Activated B cell treated with CpG ODN at 0.5 μM for 24 hours (primary cell): ENCODE measurements at regions of chr5 and their contacts with region 1.

Region 1: GRCh38 chr5:178895651-178896571 is at the start of gene ZFP2:
- DNase-seq: peak; percentile 41
- ATAC-seq: peak; percentile 93
- H3K4me3 Mint-ChIP-seq: peak within 1 kb of the TSS; percentile 82
- H3K27ac Mint-ChIP-seq: no peak within 1 kb of the TSS
- H3K4me1 Mint-ChIP-seq: peaks cover 12% of the 10 kb centered on the region
- H3K27me3 Mint-ChIP-seq: no peaks in the 10 kb centered on the region
- CTCF ChIP-seq: no peak
- total RNA-seq, gene ZFP2: 0.44 and 0.95 TPM in 2 replicates

Region 2: GRCh38 chr5:178690208-178690607 is 205.7 kb before region 1 on chr5:
- CTCF ChIA-PET with region 1: no interaction called
- POLR2A ChIA-PET with region 1: no interaction called
- intact Hi-C with region 1: no loop called
- DNase-seq: no peak
- ATAC-seq: no peak
- H3K4me3 Mint-ChIP-seq: no peak overlapping the region
- H3K27ac Mint-ChIP-seq: no peak overlapping the region
- H3K4me1 Mint-ChIP-seq: no peaks in the 10 kb centered on the region
- H3K27me3 Mint-ChIP-seq: peaks cover 3% of the 10 kb centered on the region
- CTCF ChIP-seq: no peak

Region 3: GRCh38 chr5:179023528-179024430 is 127.9 kb after region 1 on chr5 and contains the start of gene ZNF879:
- CTCF ChIA-PET with region 1: no interaction called
- POLR2A ChIA-PET with region 1: interaction called, 4 read pairs
- intact Hi-C with region 1: loop called (anchors 1 kb)
- DNase-seq: peak; percentile 94
- ATAC-seq: peak; percentile 92
- H3K4me3 Mint-ChIP-seq: peak within 1 kb of the TSS; percentile 93
- H3K27ac Mint-ChIP-seq: peak within 1 kb of the TSS; percentile 81
- H3K4me1 Mint-ChIP-seq: peaks cover 18% of the 10 kb centered on the region
- H3K27me3 Mint-ChIP-seq: peaks cover 2% of the 10 kb centered on the region
- CTCF ChIP-seq: no peak
- total RNA-seq, gene ZNF879: 8.2 and 9.4 TPM in 2 replicates

Region 4: GRCh38 chr5:179060116-179061008 is 164.5 kb after region 1 on chr5 and contains the start of gene ZNF354C:
- CTCF ChIA-PET with region 1: no interaction called
- POLR2A ChIA-PET with region 1: no interaction called
- intact Hi-C with region 1: loop called (anchors 5 kb)
- DNase-seq: peak; percentile 80
- ATAC-seq: peak; percentile 97
- H3K4me3 Mint-ChIP-seq: peak within 1 kb of the TSS; percentile 92
- H3K27ac Mint-ChIP-seq: peak within 1 kb of the TSS; percentile 86
- H3K4me1 Mint-ChIP-seq: peaks cover 20% of the 10 kb centered on the region
- H3K27me3 Mint-ChIP-seq: no peaks in the 10 kb centered on the region
- CTCF ChIP-seq: no peak
- total RNA-seq, gene ZNF354C: 6.3 and 7.1 TPM in 2 replicates

Region 5: GRCh38 chr5:179119415-179120170 is 223.7 kb after region 1 on chr5:
- CTCF ChIA-PET with region 1: no interaction called
- POLR2A ChIA-PET with region 1: no interaction called
- intact Hi-C with region 1: no loop called
- DNase-seq: no peak
- ATAC-seq: no peak
- H3K4me3 Mint-ChIP-seq: no peak overlapping the region
- H3K27ac Mint-ChIP-seq: no peak overlapping the region
- H3K4me1 Mint-ChIP-seq: no peaks in the 10 kb centered on the region
- H3K27me3 Mint-ChIP-seq: no peaks in the 10 kb centered on the region
- CTCF ChIP-seq: no peak